ENCODE measurements at regions of chr2 and their contacts with region 1.

Region 1: DNA sequence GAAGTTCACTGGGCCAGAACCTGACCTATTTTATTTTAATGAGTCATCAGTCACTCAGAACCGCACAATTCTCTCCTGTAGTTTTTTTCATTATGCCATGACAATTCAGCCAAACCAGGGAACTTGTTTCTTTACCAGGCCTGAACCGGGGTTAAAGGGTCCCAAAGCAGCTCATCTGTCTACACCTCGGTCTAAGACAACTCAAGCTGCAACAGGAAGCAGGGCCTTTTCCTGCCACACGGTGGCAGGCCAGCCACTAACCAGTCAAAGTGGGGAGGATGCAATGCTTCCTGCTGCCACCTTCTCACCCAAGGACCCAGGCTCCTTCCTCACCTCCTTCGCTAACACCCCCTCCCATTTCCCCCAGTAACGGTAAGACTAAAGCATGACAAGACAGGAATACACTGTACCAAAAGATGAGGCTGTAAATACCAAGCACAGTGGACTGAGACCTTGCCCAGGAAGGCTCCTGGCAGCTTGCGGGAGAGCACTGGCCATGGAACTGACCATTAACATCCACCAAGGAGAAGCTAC is 56.7 kb upstream of the ACKR3 start:
- DNase-seq: peak; percentile 59 to 68 (median 63)
- ATAC-seq: peak; percentile 89 to 94 (median 92)
- H3K4me3 ChIP-seq: no peak overlapping the region
- H3K27ac ChIP-seq: no peak overlapping the region
- H3K4me1 ChIP-seq: no peaks in the 10 kb centered on the region
- H3K27me3 ChIP-seq: no peaks in the 10 kb centered on the region
- CTCF ChIP-seq: peak; percentile 72 to 91 (median 84)
- POLR2A ChIP-seq: no peak

Region 2: DNA sequence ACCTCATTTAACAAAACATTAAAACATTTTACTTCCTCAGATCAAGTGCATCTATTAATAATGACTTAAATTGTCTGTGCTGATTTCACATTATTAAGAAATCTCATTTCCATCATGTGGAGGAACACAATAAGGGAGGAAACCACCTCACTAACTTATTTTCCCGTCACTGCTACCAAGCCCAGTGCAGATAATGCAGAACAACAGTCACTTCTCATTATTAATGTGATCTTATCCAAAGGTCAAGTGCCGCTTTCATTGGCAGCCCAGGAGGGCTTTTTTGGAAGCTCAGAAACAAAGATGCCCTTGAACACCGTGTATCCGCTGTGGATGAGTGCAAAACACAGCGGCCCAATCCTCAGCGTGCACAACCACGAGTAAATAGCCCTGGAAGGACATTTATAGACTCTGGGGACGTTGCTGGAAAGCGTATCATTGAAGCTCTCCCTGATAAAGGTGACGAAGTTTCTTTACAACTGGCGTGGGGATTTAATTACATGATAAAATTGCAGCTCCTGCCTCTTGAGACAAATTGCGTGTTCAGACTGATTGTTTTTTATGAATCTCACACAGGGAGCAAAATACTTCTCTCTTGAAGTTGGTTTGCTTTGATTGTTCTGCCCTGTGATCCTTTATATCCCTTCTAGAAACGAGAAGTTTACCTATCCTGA is 261.9 kb before region 1 on chr2:
- intact Hi-C with region 1: no loop called
- DNase-seq: no peak
- ATAC-seq: no peak
- H3K4me3 ChIP-seq: no peak overlapping the region
- H3K27ac ChIP-seq: no peak overlapping the region
- H3K4me1 ChIP-seq: no peaks in the 10 kb centered on the region
- H3K27me3 ChIP-seq: no peaks in the 10 kb centered on the region
- CTCF ChIP-seq: no peak
- POLR2A ChIP-seq: no peak

Region 3: GRCh38 chr2:236343400-236344161 is 169.4 kb before region 1 on chr2:
- intact Hi-C with region 1: loop called in 1 of 2 experiments (anchors 10 kb)
- DNase-seq: no peak
- ATAC-seq: peak; percentile 56 to 77 (median 66)
- H3K4me3 ChIP-seq: no peak overlapping the region
- H3K27ac ChIP-seq: no peak overlapping the region
- H3K4me1 ChIP-seq: no peaks in the 10 kb centered on the region
- H3K27me3 ChIP-seq: no peaks in the 10 kb centered on the region
- CTCF ChIP-seq: peak; percentile 69 to 77 (median 72)
- POLR2A ChIP-seq: no peak

Region 4: DNA sequence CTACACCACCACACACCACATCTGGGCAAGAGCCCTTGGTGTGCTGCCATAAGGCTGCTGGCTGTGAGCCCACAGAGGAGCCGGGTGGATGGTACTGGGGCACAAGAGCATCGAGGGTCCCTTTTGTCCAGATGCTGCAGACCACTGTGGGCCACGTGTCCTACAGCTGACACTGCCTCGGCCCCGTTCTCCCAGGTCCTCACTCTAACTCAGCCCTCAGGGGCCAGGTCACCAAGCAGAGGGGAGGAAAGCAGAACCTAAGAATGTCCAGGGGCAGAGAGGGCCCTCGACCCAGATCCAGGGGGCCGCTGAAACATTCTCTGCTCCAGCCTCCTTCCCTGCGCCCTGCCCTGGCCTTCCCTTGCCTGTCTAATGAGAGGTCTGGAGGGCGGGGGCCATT is 157.1 kb before region 1 on chr2:
- intact Hi-C with region 1: no loop called
- DNase-seq: no peak
- ATAC-seq: peak in 1 of 4 donors; percentile 15
- H3K4me3 ChIP-seq: no peak overlapping the region
- H3K27ac ChIP-seq: no peak overlapping the region
- H3K4me1 ChIP-seq: no peaks in the 10 kb centered on the region
- H3K27me3 ChIP-seq: no peaks in the 10 kb centered on the region
- CTCF ChIP-seq: no peak
- POLR2A ChIP-seq: no peak

Region 5: DNA sequence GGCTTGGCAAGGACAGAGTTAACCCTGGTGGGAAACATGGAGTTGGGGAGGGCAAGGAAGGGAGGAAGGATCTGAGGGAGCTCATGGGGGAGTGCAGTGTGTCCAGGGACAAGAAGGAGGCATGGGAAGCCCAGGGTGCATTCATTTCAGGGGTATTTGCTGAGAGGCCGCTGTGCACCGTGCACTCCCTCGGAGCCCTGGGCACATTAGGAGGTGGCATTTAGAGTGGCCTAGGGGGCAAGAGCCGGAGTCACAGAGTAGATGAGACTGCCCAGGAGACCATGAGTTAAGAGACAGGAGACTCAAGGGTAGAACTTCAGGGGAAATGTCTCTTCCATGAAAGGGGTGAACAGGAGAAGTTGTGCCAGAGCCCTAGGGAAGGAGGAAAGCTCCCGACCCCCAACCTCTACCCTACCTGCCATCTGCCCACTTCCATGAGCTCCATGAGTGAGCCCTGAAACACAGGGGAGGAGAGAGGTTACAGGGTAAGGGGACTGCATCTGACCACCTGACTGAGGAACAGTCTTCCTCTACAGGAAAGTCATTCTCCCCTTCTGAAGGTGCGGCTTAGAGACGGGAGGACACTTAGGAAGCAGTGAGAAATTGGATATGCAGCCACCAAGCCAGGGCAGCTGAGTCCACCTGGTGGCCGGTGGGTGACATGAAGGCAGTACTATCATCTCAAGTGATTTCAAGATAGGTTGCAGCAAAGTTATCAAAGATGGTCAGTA is 514.2 kb after region 1 on chr2:
- intact Hi-C with region 1: loop called (anchors 5 to 10 kb)
- DNase-seq: peak; percentile 67 to 74 (median 68)
- ATAC-seq: peak; percentile 83 to 94 (median 86)
- H3K4me3 ChIP-seq: no peak overlapping the region
- H3K27ac ChIP-seq: no peak overlapping the region
- H3K4me1 ChIP-seq: no peaks in the 10 kb centered on the region
- H3K27me3 ChIP-seq: no peaks in the 10 kb centered on the region
- CTCF ChIP-seq: peak; percentile 86 to 95 (median 88)
- POLR2A ChIP-seq: no peak